ENCODE measurements at regions of chr11 and their contacts with region 1.

Region 1: DNA sequence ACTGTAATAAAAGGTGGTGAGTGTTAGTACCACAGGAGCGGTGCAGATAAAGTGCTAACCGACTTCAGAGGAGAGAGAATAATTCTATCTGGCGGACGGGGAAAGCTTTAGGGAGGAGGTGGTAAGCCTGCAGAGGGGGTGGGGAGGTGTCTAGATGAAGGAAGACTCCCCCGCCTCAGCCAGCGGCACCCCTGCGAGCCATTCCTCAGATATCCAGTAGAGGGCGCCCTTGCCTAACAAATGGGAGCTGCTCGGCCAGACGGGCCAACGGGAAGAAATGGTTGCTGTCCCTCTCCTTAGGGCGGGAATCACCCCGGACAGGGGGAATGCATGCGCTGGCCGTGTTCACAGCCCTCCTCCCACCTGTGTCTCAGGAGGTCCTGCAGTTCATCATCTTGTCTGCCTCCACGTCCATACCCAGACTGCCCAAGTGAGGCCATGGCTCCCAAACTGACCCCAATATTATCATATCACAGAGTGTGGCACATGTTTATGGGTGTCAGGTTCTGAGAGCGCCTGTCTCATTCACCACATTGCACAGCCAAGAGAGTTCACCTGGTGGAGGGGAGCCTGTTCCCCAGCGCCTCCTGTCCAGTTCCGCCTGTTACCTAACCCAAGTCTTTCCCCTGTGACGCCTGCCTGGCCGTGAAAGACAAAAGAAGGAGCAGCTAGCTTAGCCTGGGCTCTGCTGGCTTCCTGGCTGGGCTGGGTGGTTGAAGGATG is 85.5 kb downstream of the ST3GAL4 start:
- DNase-seq: no peak
- H3K4me3 ChIP-seq: no peak overlapping the region
- H3K27ac ChIP-seq: no peak overlapping the region
- H3K27me3 ChIP-seq: no peaks in the 10 kb centered on the region
- CTCF ChIP-seq: peak; percentile 92

Region 2: DNA sequence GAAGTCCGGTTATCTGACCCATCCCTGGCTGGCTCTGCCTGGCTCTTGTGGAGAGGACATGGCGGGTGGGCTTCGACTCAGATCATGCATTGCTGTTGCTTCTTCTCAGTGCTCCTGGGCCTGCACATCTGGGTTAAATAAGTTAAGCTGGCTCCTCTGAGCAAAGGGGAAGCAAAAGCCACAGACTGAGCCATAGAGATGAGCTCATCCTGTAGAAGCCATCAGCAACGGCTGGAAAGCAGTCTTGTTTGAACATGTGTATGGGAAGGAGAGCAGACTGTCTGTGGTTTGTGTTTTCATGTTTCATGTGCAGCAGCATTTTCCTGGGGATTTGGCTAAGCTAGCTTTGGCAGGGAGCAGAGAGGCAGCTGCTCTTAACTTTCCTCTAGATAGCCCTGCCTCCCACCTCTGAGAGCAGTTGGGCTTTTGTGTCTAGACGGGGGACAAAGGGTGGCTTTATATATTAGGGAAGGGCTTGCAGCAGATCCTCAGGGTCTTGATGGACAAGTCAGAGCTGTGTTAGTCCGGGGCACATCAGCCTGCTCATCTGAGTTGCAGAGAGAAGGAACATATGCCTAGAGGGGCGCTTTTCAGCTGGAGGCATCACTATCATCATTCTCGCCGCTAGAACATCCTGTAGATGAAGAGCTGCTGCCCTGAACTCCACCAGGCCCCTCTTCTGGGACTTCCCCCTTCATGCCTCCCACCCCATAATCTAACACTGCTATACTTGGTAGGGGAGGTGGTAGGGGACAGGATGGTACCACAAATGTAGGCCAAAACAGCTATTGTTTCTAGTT is 122.2 kb before region 1 on chr11:
- CTCF ChIA-PET with region 1: interaction called, 10 read pairs
- POLR2A ChIA-PET with region 1: no interaction called
- DNase-seq: peak; percentile 88
- H3K4me3 ChIP-seq: peak overlapping the region; percentile 49
- H3K27ac ChIP-seq: peak overlapping the region; percentile 99
- H3K27me3 ChIP-seq: no peaks in the 10 kb centered on the region
- CTCF ChIP-seq: no peak

Region 3: DNA sequence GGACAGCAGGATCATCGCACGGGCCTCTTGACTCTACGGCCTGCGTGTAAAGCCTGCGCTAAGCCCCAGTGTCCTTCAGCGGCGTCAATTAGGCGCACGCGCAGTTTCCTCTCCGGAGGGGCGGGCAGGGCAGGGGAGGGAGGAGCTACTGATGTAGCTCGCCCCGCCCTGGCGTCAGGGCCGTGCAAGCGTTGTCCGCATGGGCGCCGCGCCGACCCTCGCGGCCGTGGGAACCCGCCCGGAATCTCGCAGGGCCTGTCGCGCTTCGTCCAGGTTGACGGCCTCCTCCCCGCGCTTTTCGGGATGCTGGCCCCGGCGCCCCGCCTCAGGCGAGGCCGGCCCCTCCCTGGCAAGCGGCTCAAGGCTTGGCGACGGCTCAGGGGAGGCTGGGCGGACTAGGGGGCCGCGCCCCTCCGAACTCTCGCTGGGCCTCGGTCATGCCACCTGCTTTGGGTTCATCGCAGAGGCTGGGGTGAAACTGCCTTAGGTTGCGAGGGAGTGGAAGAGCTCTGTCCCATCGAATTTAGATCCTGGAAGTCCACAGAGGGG is 24.3 kb before region 1 on chr11:
- CTCF ChIA-PET with region 1: interaction called, 23 read pairs
- POLR2A ChIA-PET with region 1: no interaction called
- DNase-seq: no peak
- H3K4me3 ChIP-seq: peak overlapping the region; percentile 56
- H3K27ac ChIP-seq: no peak overlapping the region
- H3K27me3 ChIP-seq: no peaks in the 10 kb centered on the region
- CTCF ChIP-seq: no peak

Region 4: GRCh38 chr11:127345819-127346459 is 905.0 kb after region 1 on chr11:
- CTCF ChIA-PET with region 1: interaction called, 50 read pairs
- POLR2A ChIA-PET with region 1: no interaction called
- DNase-seq: no peak
- H3K4me3 ChIP-seq: no peak overlapping the region
- H3K27ac ChIP-seq: no peak overlapping the region
- H3K27me3 ChIP-seq: no peaks in the 10 kb centered on the region
- CTCF ChIP-seq: peak; percentile 89